Aorta (tissue), 5 donors: ENCODE measurements at regions of chr3 and their contacts with region 1.

Region 1: GRCh38 chr3:128680602-128681368 is 30.2 kb upstream of the RPN1 start:
- DNase-seq: peak; percentile 100
- ATAC-seq: peak; percentile 100
- H3K4me3 ChIP-seq: peak overlapping the region; percentile 30 to 58
- H3K27ac ChIP-seq: peak overlapping the region; percentile 65 to 70
- H3K4me1 ChIP-seq: no peaks in the 10 kb centered on the region
- H3K27me3 ChIP-seq: no peaks in the 10 kb centered on the region

Region 2: GRCh38 chr3:128112357-128112968 is 568.3 kb before region 1 on chr3:
- intact Hi-C with region 1: no loop called
- DNase-seq: peak in 1 of 2 donors; percentile 58
- ATAC-seq: no peak
- H3K4me3 ChIP-seq: no peak overlapping the region
- H3K27ac ChIP-seq: peak overlapping the region in 1 of 2 donors; percentile 32
- H3K4me1 ChIP-seq: no peaks in the 10 kb centered on the region
- H3K27me3 ChIP-seq: no peaks in the 10 kb centered on the region

Region 3: DNA sequence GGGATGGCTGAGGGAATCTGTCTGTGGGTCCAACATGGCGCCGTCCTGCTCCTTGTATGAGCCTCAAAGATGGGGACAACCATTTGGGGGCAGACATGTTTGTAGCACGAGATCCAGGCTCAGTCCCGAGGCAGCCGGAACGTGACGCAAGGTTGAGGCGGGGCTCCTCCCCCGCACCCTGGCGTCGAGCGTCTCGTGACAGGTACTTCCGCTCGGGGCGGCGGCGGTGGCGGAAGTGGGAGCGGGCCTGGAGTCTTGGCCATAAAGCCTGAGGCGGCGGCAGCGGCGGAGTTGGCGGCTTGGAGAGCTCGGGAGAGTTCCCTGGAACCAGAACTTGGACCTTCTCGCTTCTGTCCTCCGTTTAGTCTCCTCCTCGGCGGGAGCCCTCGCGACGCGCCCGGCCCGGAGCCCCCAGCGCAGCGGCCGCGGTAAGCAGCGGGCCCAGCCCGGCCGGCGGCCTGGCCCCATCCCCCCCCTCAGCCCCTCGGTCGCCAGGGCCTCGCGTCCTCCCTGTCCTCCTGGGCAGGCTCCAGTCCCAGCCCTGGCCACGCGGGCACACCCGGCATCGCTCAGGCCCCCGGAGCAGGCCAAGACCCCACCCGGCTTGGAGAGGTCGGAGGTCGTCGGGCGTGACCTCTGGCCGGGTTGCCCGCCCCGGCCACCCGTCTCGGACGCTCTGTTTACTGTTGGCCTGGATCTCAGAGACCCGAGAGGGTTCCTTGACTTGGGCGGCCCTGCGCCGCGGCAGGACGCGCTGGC is 45.3 kb after region 1 on chr3 and contains the start of gene RAB7A:
- intact Hi-C with region 1: loop called in 1 of 2 experiments (anchors 2 kb)
- DNase-seq: peak; percentile 99
- ATAC-seq: peak; percentile 99
- H3K4me3 ChIP-seq: peak within 1 kb of the TSS; percentile 88
- H3K27ac ChIP-seq: peak within 1 kb of the TSS; percentile 7 to 92
- H3K4me1 ChIP-seq: peaks cover 5 to 10% of the 10 kb centered on the region in 2 donors
- H3K27me3 ChIP-seq: no peaks in the 10 kb centered on the region
- total RNA-seq, gene RAB7A: 202 to 211 TPM

Region 4: DNA sequence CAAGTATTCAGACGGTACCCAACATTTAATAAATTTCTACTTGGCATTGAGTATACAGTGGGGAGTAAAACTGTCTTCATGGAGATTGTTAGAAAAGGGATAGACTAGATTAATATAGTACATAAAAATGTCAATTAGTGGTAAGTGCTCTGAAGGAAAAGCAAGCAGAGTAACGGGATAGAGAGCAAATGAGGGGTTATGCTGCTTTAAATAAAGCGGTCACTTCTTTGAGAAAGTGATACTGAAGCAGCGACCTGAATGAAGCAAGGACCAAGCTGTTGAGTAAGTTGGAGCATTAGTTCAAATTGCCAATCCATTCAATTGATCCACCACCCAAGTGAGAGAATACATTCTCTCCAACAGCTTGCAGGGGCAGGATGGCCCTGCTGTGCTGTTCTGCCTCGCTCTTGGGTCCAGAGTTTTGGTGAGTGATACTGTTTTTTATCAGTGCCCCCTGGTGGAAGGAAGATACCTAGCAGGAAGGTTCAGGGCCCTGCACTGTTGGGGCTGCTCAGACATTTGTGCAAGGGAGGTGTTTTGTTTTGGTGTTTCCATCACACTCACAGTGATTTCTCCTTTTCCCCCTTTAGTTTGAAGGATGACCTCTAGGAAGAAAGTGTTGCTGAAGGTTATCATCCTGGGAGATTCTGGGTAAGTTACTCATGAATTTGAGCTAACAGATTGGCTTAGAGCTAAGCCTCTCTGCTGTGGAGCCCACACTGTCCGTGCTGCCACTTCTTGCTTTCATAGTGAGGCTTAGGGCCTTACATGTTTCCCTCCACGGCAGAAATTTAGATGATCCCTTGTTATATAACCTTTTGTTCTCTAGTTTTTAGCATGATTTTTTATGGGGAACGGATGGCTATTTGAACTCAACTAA is 114.2 kb after region 1 on chr3:
- intact Hi-C with region 1: loop called (anchors 2 kb)
- DNase-seq: no peak
- ATAC-seq: peak; percentile 88
- H3K4me3 ChIP-seq: no peak overlapping the region
- H3K27ac ChIP-seq: no peak overlapping the region
- H3K4me1 ChIP-seq: peaks cover 3 to 5% of the 10 kb centered on the region in 2 donors
- H3K27me3 ChIP-seq: no peaks in the 10 kb centered on the region

Region 5: DNA sequence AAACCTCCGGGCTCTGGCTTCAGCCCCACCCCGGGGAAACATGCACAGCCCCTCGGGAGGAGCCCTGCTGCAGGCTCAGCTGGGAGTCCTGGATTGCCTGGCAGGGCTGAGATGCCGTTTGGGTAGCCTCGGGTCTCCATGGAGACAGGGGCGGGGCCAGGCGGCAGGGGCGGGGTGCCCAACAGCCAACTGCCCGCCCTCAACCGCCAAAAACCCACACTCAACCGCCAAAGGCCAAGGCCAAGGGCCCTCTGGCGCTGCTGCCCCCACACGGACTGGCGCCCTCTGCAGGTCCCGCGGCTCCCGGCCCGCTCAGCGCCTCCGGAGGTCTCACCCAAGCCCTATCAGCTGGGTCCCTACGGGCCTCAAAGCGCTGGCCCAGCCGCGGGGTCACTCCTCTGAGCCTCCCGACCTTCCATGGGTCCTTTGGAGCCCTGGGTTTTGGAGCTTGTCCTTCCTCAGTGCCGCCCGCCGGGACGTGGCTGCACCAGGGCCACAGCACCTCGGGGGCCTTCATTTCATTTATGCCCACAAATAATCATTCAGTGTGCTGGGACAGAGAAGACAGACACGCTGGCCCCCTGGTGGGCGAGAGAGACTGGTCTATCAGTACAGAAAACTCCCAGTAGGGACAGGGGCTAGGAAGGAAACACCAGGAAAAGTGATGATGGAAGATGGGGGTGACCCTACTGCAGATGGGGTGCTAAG is 165.1 kb after region 1 on chr3:
- intact Hi-C with region 1: loop called in 1 of 2 experiments (anchors 5 kb)
- DNase-seq: peak; percentile 93 to 95
- ATAC-seq: peak; percentile 91
- H3K4me3 ChIP-seq: peak overlapping the region; percentile 6 to 40
- H3K27ac ChIP-seq: peak overlapping the region in 1 of 2 donors; percentile 24
- H3K4me1 ChIP-seq: no peaks in the 10 kb centered on the region
- H3K27me3 ChIP-seq: no peaks in the 10 kb centered on the region

Region 6: GRCh38 chr3:129249276-129250065 is 568.7 kb after region 1 on chr3 and contains the start of gene COPG1:
- intact Hi-C with region 1: no loop called
- DNase-seq: peak; percentile 90 to 95
- ATAC-seq: peak; percentile 97
- H3K4me3 ChIP-seq: peak within 1 kb of the TSS; percentile 61 to 75
- H3K27ac ChIP-seq: peak within 1 kb of the TSS in 1 of 2 donors; percentile 64
- H3K4me1 ChIP-seq: peaks cover 0 to 2% of the 10 kb centered on the region in 2 donors
- H3K27me3 ChIP-seq: no peaks in the 10 kb centered on the region
- total RNA-seq, gene COPG1: 149 to 155 TPM